Heart left ventricle (tissue), 16 donors: ENCODE measurements at regions of chr2 and their contacts with region 1.

Region 1: GRCh38 chr2:40358783-40359182 is 93.1 kb downstream of the SLC8A1 start:
- DNase-seq: no peak
- ATAC-seq: no peak
- H3K4me3 ChIP-seq: no peak overlapping the region
- H3K27ac ChIP-seq: no peak overlapping the region
- H3K4me1 ChIP-seq: peaks cover 0 to 58% (median 26%) of the 10 kb centered on the region in 12 donors
- H3K27me3 ChIP-seq: no peaks in the 10 kb centered on the region
- CTCF ChIP-seq: no peak
- POLR2A ChIP-seq: no peak

Region 2: DNA sequence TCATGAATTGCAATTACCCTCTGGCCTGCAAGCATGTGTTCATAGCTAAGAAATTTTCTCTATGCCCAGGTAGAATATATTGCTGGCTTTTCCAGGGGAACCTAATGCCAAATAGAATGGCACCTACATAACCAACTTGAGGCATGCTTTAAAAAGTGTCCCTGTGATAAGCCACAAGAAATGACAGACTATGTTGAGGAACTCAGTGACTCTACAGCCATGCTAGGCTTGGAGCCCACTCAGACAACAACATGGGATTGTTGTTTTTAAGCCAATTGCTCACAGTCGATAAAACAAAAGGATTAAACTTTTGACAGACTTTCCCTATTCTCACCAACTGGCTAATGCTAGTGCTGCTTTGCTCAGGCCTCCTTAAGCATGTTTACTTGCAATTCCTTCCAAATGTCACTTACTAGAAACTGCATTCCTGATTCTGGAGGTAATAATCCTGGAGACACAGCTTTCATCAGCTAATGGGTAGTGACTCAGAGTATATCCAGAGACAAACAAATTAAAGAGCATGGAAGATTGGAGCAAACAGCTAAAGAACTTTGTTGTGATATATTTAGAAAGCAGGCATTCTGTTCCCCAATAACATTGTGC is 155.9 kb before region 1 on chr2:
- intact Hi-C with region 1: no loop called
- DNase-seq: no peak
- ATAC-seq: peak in 2 of 4 donors; percentile 37 to 48
- H3K4me3 ChIP-seq: no peak overlapping the region
- H3K27ac ChIP-seq: peak overlapping the region in 6 of 12 donors; percentile 9 to 50 (median 20)
- H3K4me1 ChIP-seq: peaks cover 0 to 44% (median 18%) of the 10 kb centered on the region in 12 donors
- H3K27me3 ChIP-seq: no peaks in the 10 kb centered on the region
- CTCF ChIP-seq: no peak
- POLR2A ChIP-seq: no peak

Region 3: GRCh38 chr2:40401896-40402295 is 43.1 kb after region 1 on chr2:
- intact Hi-C with region 1: loop called in 1 of 10 experiments (anchors 5 kb)
- DNase-seq: no peak
- ATAC-seq: no peak
- H3K4me3 ChIP-seq: no peak overlapping the region
- H3K27ac ChIP-seq: peak overlapping the region in 2 of 12 donors; percentile 27 to 68
- H3K4me1 ChIP-seq: peaks cover 0 to 89% (median 51%) of the 10 kb centered on the region in 12 donors
- H3K27me3 ChIP-seq: no peaks in the 10 kb centered on the region
- CTCF ChIP-seq: no peak
- POLR2A ChIP-seq: no peak